ENCODE measurements at regions of chr10 and their contacts with region 1.

Region 1: DNA sequence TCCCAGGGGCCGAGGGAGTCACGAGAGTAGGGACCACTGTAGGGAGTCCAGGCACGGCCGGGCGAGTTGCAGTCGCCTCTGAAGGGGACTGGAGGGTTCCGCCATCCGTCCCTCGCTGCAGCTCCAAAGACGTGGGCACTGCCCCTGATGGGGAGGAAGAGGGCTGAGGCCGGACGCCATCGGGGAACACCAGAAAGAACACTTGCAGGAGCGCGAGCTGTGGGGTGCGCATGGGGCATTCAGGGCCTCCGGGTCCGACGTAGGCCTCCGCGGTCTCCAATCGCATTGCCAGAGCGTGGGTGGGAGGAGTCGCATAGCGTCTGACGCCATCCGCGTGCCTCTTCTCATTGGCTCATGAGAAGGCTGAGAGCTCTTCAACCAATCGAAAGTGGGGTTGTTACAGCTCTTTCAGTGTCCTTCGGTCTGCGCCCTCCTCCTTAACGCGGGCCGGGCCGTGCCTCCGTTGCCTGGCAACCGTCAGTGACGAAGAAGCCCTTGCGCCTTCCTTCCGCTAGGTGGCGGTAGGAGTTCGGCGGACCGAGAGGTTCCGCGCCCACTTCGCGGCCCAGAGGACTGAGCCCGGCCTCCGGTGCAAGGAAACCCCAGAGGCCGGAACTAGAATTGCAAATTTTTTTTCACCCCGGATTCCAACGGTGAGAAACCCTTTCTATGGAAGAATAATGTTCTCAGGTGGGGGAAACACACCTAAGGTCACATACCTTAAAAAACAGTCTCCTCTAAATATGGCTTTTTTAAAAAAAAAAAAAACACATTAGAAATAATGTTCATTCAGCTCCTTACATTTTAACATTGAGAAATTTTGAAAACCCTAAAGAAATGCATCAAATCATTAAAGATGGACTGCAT is at the start of gene TCTN3:
- DNase-seq: peak; percentile 98
- H3K4me3 Mint-ChIP-seq: peak within 1 kb of the TSS; percentile 98
- H3K27ac Mint-ChIP-seq: peak within 1 kb of the TSS; percentile 95
- H3K4me1 Mint-ChIP-seq: peaks cover 48% of the 10 kb centered on the region
- H3K27me3 Mint-ChIP-seq: no peaks in the 10 kb centered on the region
- total RNA-seq, gene TCTN3: 56.3 and 58.0 TPM in 2 replicates

Region 2: GRCh38 chr10:95656291-95657164 is 37.4 kb before region 1 on chr10 and contains the start of gene ALDH18A1:
- intact Hi-C with region 1: loop called (anchors 1 kb)
- DNase-seq: peak; percentile 89
- H3K4me3 Mint-ChIP-seq: peak within 1 kb of the TSS; percentile 99
- H3K27ac Mint-ChIP-seq: peak within 1 kb of the TSS; percentile 98
- H3K4me1 Mint-ChIP-seq: peaks cover 27% of the 10 kb centered on the region
- H3K27me3 Mint-ChIP-seq: no peaks in the 10 kb centered on the region
- total RNA-seq, gene ALDH18A1: 122 and 127 TPM in 2 replicates

Region 3: GRCh38 chr10:95832216-95833041 is 138.5 kb after region 1 on chr10:
- intact Hi-C with region 1: loop called (anchors 2 kb)
- DNase-seq: peak; percentile 71
- H3K4me3 Mint-ChIP-seq: peak overlapping the region; percentile 86
- H3K27ac Mint-ChIP-seq: peak overlapping the region; percentile 100
- H3K4me1 Mint-ChIP-seq: peaks cover 73% of the 10 kb centered on the region
- H3K27me3 Mint-ChIP-seq: no peaks in the 10 kb centered on the region

Region 4: DNA sequence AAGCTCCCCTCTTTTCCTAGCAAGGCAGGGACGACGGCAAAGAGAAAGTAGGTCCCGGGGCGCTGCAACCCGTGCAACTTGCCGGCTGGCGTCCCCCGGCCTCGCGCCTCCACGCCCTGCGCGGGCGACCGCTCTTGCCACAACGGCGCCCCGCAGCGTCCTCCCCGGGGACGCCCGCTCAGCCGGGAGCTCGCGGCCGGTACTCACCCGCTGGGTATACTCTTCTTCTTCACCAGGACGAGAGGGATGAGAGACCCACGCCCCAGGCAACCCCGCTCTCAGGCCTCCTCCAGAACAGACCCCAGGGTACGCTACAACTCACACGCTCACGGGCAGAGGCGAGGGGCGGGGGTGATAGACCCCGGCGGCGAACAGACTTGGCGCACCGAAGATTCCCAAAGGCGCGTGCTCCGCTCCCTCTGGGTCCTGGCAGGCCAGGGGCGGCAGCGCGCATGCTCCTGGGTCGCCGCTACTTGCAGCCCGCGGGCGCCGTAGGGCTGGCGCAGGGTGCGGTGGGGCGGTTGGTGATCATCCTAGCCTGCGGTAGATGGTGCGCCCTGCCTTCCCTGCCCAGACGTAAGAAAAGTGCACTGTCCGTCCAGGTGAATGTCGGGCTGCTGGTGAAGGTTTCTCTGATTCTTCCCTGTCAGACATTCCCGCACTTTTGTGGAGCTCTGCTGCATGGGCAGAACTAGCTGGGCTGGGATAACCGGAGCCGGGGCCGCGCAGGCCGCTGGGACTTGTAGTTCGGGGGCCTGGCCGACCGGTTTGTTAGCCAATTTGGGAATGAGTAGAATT is 213.8 kb after region 1 on chr10 and contains the start of gene CC2D2B:
- intact Hi-C with region 1: loop called (anchors 1 kb)
- DNase-seq: peak; percentile 59
- H3K4me3 Mint-ChIP-seq: peak within 1 kb of the TSS; percentile 92
- H3K27ac Mint-ChIP-seq: peak within 1 kb of the TSS; percentile 91
- H3K4me1 Mint-ChIP-seq: peaks cover 16% of the 10 kb centered on the region
- H3K27me3 Mint-ChIP-seq: peaks cover 16% of the 10 kb centered on the region
- total RNA-seq, gene CC2D2B: 0.60 and 0.96 TPM in 2 replicates

Region 5: DNA sequence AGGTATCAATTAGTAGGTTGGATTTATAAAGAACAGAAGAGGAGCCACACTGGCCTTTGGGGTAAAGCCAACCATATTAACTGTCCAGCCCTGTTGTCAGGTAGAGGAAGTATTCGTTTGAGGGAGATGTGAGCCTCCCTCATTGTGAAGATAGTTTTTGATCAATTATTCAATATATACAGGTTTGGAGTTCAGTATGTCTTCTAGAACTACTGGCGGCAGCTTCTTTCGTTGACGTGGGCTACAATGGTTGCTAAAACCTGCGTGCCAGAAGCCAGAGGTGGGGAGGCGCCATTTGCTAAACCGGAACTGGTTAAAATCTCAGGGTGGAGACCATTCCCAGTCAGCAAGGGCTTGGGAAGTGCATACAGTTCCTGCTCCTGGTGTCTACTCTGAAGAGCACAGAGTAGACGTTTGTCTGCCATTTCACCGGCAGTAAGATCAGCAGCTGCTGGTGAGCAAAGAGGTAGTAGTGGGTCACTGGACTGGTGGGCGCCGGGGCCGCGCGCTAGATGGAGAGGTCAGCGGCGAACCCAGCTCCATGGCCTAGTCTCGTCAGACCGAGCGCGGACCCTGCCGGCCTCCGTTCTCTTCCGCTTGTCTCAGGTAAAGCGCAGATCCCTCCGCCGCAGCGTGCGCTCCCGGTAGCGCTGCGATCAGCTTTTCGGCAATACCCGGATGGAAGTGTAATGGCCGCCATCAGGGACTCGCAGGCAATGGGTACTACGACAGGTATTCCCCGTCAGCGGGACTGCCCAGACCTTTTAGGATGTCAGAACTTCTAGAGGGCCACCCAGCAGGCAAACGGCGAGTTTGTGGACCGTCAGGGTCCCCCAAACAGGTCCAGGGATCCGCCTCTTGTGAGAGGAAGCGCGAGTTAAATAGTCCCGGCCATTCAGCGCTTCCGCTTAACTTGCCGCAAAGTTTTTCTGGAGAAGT is 435.8 kb after region 1 on chr10 and contains the start of gene ZNF518A:
- intact Hi-C with region 1: loop called (anchors 2 kb)
- DNase-seq: peak; percentile 86
- H3K4me3 Mint-ChIP-seq: peak within 1 kb of the TSS; percentile 90
- H3K27ac Mint-ChIP-seq: peak within 1 kb of the TSS; percentile 99
- H3K4me1 Mint-ChIP-seq: peaks cover 33% of the 10 kb centered on the region
- H3K27me3 Mint-ChIP-seq: peaks cover 27% of the 10 kb centered on the region
- total RNA-seq, gene ZNF518A: 14.3 and 16.2 TPM in 2 replicates

Measured in activated T-helper 1 cell treated with anti-CD3 and anti-CD28 coated beads, Interleukin-12 subunit alpha, Interleukin-12 subunit beta, Interleukin-2, Interleukin-4 antibody, amounts not matched to agents 30 ng/mL and 10 ng/mL and 1 ng/mL, durations not matched to agents 14 hours and 24 hours and 36 hours (primary cell).